Naive thymus-derived CD4-positive, alpha-beta T cell (primary cell): ENCODE measurements at regions of chr11 and their contacts with region 1.

Region 1: GRCh38 chr11:48001438-48002021 is 21.2 kb downstream of the PTPRJ start:
- DNase-seq: peak; percentile 36 to 96 (median 94)
- ATAC-seq: peak; percentile 97
- H3K4me3 ChIP-seq: peak overlapping the region; percentile 23
- H3K4me3 Mint-ChIP-seq: peak overlapping the region; percentile 63 to 91 (median 78)
- H3K27ac ChIP-seq: peak overlapping the region; percentile 71
- H3K27ac Mint-ChIP-seq: peak overlapping the region; percentile 94 to 98 (median 97)
- H3K4me1 ChIP-seq: peaks cover 77 to 81% of the 10 kb centered on the region in 2 donors
- H3K4me1 Mint-ChIP-seq: peaks cover 55 to 95% (median 86%) of the 10 kb centered on the region in 7 donors
- H3K27me3 ChIP-seq: no peaks in the 10 kb centered on the region
- H3K27me3 Mint-ChIP-seq: no peaks in the 10 kb centered on the region

Region 2: GRCh38 chr11:47766305-47767227 is 235.0 kb before region 1 on chr11:
- CTCF ChIA-PET with region 1: no interaction called
- POLR2A ChIA-PET with region 1: no interaction called
- intact Hi-C with region 1: loop called in 1 of 2 experiments (anchors 1 kb)
- DNase-seq: peak; percentile 60 to 84 (median 79)
- ATAC-seq: peak; percentile 52
- H3K4me3 ChIP-seq: peak overlapping the region; percentile 94
- H3K4me3 Mint-ChIP-seq: peak overlapping the region; percentile 88 to 100 (median 96)
- H3K27ac ChIP-seq: peak overlapping the region; percentile 97
- H3K27ac Mint-ChIP-seq: peak overlapping the region; percentile 96 to 100 (median 99)
- H3K4me1 ChIP-seq: peaks cover 20 to 22% of the 10 kb centered on the region in 2 donors
- H3K4me1 Mint-ChIP-seq: peaks cover 16 to 39% (median 23%) of the 10 kb centered on the region in 7 donors
- H3K27me3 ChIP-seq: no peaks in the 10 kb centered on the region
- H3K27me3 Mint-ChIP-seq: no peaks in the 10 kb centered on the region

Region 3: GRCh38 chr11:47932544-47932943 is 69.0 kb before region 1 on chr11:
- CTCF ChIA-PET with region 1: interaction called, 13 read pairs
- POLR2A ChIA-PET with region 1: interaction called, 3 read pairs
- intact Hi-C with region 1: loop called in 1 of 2 experiments (anchors 1 kb)
- DNase-seq: no peak
- ATAC-seq: no peak
- H3K4me3 ChIP-seq: no peak overlapping the region
- H3K4me3 Mint-ChIP-seq: no peak overlapping the region
- H3K27ac ChIP-seq: no peak overlapping the region
- H3K27ac Mint-ChIP-seq: peak overlapping the region in 1 of 9 donors; percentile 41
- H3K4me1 ChIP-seq: peaks cover 7 to 13% of the 10 kb centered on the region in 2 donors
- H3K4me1 Mint-ChIP-seq: peaks cover 0 to 28% (median 17%) of the 10 kb centered on the region in 7 donors
- H3K27me3 ChIP-seq: no peaks in the 10 kb centered on the region
- H3K27me3 Mint-ChIP-seq: peaks cover 0 to 2% (median 0%) of the 10 kb centered on the region in 5 donors

Region 4: GRCh38 chr11:47980245-47981049 is 21.1 kb before region 1 on chr11 and contains the start of gene PTPRJ:
- CTCF ChIA-PET with region 1: interaction called, 5 read pairs
- POLR2A ChIA-PET with region 1: interaction called, 15 read pairs
- intact Hi-C with region 1: loop called (anchors 1 kb)
- DNase-seq: peak; percentile 46 to 75 (median 66)
- ATAC-seq: peak; percentile 85
- H3K4me3 ChIP-seq: peak within 1 kb of the TSS; percentile 67
- H3K4me3 Mint-ChIP-seq: peak within 1 kb of the TSS; percentile 77 to 95 (median 90)
- H3K27ac ChIP-seq: peak within 1 kb of the TSS; percentile 79
- H3K27ac Mint-ChIP-seq: peak within 1 kb of the TSS; percentile 12 to 86 (median 64)
- H3K4me1 ChIP-seq: peaks cover 25% of the 10 kb centered on the region in 2 donors
- H3K4me1 Mint-ChIP-seq: peaks cover 29 to 37% (median 35%) of the 10 kb centered on the region in 7 donors
- H3K27me3 ChIP-seq: no peaks in the 10 kb centered on the region
- H3K27me3 Mint-ChIP-seq: peaks cover 0 to 19% (median 0%) of the 10 kb centered on the region in 5 donors
- total RNA-seq, gene PTPRJ: 31.8 to 82.3 (median 53.9) TPM

Region 5: DNA sequence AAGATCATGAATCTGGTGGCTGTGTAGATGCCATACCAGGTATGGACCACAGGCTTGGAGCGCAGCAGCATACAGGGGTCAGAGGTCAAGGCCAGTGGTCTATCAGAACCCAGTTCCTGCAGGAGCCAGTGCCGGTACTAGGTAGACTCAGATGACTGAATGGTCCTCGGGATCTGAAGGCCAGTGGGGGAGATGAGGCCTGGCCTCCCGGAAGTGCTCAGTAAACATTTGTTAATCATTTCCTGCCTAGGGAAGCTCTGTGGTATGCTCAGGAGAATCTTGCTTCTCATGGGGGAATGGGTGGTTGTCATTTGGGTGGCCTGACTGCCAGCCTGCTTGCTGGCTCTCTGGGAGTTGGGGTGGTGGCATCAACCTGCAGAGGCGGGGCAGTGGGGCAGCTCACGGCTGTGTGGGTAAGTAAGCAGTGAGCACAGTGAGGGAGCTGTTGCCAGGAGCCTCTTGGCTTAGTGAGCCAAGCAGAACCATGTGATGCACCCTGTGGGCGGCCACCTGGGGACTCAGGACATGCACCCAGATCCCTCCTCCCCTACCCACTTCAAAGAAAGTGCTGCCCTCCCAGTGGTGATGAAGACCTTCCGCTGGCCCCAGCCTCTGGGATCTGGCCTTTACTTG is 11.9 kb after region 1 on chr11:
- CTCF ChIA-PET with region 1: interaction called, 5 read pairs
- POLR2A ChIA-PET with region 1: interaction called, 24 read pairs
- intact Hi-C with region 1: loop called (anchors 1 kb)
- DNase-seq: peak in 1 of 9 donors; percentile 62
- ATAC-seq: peak; percentile 46
- H3K4me3 ChIP-seq: peak overlapping the region; percentile 20
- H3K4me3 Mint-ChIP-seq: peak overlapping the region in 9 of 10 donors; percentile 37 to 79 (median 63)
- H3K27ac ChIP-seq: peak overlapping the region; percentile 34
- H3K27ac Mint-ChIP-seq: peak overlapping the region; percentile 86 to 97 (median 90)
- H3K4me1 ChIP-seq: peaks cover 70 to 88% of the 10 kb centered on the region in 2 donors
- H3K4me1 Mint-ChIP-seq: peaks cover 58 to 89% (median 84%) of the 10 kb centered on the region in 7 donors
- H3K27me3 ChIP-seq: no peaks in the 10 kb centered on the region
- H3K27me3 Mint-ChIP-seq: no peaks in the 10 kb centered on the region

Region 6: GRCh38 chr11:48028914-48029680 is 27.6 kb after region 1 on chr11:
- CTCF ChIA-PET with region 1: interaction called, 4 read pairs
- POLR2A ChIA-PET with region 1: interaction called, 18 read pairs
- intact Hi-C with region 1: no loop called
- DNase-seq: peak in 6 of 9 donors; percentile 34 to 57 (median 46)
- ATAC-seq: peak; percentile 61
- H3K4me3 ChIP-seq: peak overlapping the region; percentile 3
- H3K4me3 Mint-ChIP-seq: peak overlapping the region in 9 of 10 donors; percentile 5 to 71 (median 63)
- H3K27ac ChIP-seq: peak overlapping the region; percentile 55
- H3K27ac Mint-ChIP-seq: peak overlapping the region; percentile 82 to 95 (median 90)
- H3K4me1 ChIP-seq: peaks cover 17 to 33% of the 10 kb centered on the region in 2 donors
- H3K4me1 Mint-ChIP-seq: peaks cover 40 to 80% (median 61%) of the 10 kb centered on the region in 7 donors
- H3K27me3 ChIP-seq: no peaks in the 10 kb centered on the region
- H3K27me3 Mint-ChIP-seq: no peaks in the 10 kb centered on the region

Region 7: DNA sequence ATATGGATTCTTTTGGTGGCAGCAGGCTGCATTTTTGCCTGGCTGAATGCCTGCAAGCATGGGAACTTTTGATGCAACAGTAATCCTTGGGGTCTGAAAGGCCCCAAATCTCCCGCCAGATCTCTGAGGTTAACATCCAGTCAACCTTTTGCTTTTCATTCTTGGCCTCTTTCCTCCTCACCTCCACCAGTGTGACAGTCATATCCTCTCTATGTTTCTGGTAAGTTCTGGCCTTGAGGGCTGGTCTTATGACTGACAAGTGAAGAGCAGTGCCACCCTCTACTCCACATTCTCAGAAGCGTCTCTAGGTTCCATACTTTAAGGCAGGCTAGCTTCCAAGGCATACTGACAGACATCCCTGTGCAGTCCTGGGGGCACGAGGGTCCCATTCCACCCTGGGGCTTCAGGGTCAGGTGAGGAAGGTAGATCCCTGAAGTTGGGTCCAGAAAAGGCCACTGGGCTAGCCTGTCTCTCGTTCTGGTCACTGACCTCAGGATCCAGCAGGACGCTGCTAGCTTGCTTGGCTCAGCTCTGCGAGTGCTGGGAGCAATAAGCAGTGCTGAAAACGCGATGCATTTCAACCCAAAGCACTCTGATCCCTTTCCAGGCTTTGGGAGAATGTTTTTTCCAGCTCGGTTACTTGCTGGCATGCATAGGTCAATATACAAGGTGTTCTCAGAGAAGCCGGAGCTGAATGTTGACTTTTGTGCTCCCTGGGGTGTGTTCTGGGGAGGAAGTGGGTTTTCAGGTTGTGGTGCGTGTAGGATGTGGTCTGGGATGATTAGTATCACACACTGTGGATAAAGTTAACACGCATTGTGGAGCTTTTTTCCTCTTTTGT is 54.0 kb after region 1 on chr11:
- CTCF ChIA-PET with region 1: interaction called, 24 read pairs
- POLR2A ChIA-PET with region 1: interaction called, 129 read pairs
- intact Hi-C with region 1: loop called (anchors 1 kb)
- DNase-seq: peak in 8 of 9 donors; percentile 69 to 91 (median 88)
- ATAC-seq: peak; percentile 91
- H3K4me3 ChIP-seq: peak overlapping the region; percentile 58
- H3K4me3 Mint-ChIP-seq: peak overlapping the region; percentile 74 to 88 (median 78)
- H3K27ac ChIP-seq: peak overlapping the region; percentile 34
- H3K27ac Mint-ChIP-seq: peak overlapping the region; percentile 41 to 98 (median 92)
- H3K4me1 ChIP-seq: peaks cover 67 to 84% of the 10 kb centered on the region in 2 donors
- H3K4me1 Mint-ChIP-seq: peaks cover 70 to 91% (median 87%) of the 10 kb centered on the region in 7 donors
- H3K27me3 ChIP-seq: no peaks in the 10 kb centered on the region
- H3K27me3 Mint-ChIP-seq: peaks cover 0 to 2% (median 0%) of the 10 kb centered on the region in 5 donors